ENCODE measurements at regions of chr10 and their contacts with region 1.

Region 1: GRCh38 chr10:119596537-119597404 is at the start of gene TIAL1:
- DNase-seq: peak; percentile 99
- H3K4me3 ChIP-seq: peak within 1 kb of the TSS; percentile 78 to 97 (median 88)
- H3K27ac ChIP-seq: peak within 1 kb of the TSS; percentile 96 to 99 (median 98)
- H3K4me1 ChIP-seq: peaks cover 4 to 47% (median 43%) of the 10 kb centered on the region in 4 donors
- H3K27me3 ChIP-seq: no peaks in the 10 kb centered on the region
- CTCF ChIP-seq: no peak
- EP300 ChIP-seq: no peak
- POLR2A ChIP-seq: peak; percentile 73 to 87
- total RNA-seq, gene TIAL1: 68.3 to 132 (median 90.0) TPM

Region 2: DNA sequence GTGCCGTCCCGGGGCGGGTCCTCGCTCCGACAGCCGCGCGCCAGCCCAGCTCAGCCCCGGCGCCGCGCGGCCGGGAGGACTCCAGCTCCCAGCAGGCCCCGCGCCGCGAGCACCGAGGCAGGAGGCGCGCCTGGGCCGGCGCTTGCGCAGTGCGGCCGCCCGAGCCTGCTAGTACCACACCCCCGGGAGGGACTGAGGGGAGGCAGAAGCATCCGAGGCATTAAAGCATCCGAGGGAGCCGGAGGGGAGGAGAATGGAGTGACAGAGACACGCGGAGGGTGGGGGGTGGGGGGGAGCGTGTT is 389.5 kb before region 1 on chr10 and contains the start of gene GRK5:
- intact Hi-C with region 1: loop called (anchors 5 kb)
- DNase-seq: peak; percentile 98
- H3K4me3 ChIP-seq: peak within 1 kb of the TSS; percentile 60 to 87 (median 69)
- H3K27ac ChIP-seq: peak within 1 kb of the TSS; percentile 92 to 100 (median 98)
- H3K4me1 ChIP-seq: peaks cover 0 to 50% (median 43%) of the 10 kb centered on the region in 4 donors
- H3K27me3 ChIP-seq: no peaks in the 10 kb centered on the region
- CTCF ChIP-seq: no peak
- EP300 ChIP-seq: no peak
- POLR2A ChIP-seq: no peak
- total RNA-seq, gene GRK5: 19.8 to 32.4 (median 22.2) TPM

Region 3: DNA sequence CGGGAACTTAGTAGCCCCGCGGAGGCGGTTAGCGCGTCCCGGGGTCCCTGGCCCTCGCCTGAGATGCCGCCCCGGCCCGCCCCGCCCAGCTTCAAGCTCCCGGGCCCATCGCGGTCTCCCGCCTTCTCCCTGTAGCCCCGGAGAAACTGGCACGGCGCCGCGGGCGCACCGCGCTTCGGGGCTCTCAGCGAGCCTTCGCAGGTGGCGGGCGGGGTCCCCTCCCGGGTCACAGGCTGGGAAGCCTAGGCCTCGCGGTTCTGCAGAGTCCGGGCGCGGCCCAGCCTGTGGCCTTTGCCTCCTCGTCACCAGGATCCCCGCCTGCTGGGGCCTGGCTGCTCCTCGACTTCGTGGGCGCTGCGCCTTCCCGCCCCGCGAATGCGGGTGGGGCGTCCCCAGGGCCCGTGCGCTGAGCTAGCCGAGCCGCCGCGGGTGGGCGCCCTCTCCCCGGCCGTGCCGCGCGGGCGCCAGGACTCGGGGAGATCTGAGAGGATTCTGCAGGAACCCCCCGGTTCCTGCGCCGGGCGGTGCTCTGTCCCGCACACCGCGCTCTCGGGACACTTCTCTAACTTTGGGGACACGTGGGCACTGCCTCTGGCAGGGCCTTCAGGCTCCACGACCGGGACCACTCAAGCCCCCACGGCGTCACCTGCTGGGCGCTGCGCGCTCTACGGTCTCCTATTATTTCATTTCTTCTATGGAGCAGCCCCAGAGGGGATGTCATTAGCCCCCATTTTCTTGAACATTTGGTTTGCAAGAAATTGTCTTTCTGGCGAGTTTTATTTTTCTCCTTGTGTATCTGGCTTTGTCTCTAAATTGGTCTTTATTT is 53.6 kb before region 1 on chr10:
- intact Hi-C with region 1: loop called (anchors 2 kb)
- DNase-seq: peak; percentile 82
- H3K4me3 ChIP-seq: peak overlapping the region; percentile 73 to 96 (median 82)
- H3K27ac ChIP-seq: peak overlapping the region; percentile 78 to 97 (median 89)
- H3K4me1 ChIP-seq: peaks cover 0 to 66% (median 64%) of the 10 kb centered on the region in 4 donors
- H3K27me3 ChIP-seq: no peaks in the 10 kb centered on the region
- CTCF ChIP-seq: peak; percentile 26 to 53 (median 48)
- EP300 ChIP-seq: no peak
- POLR2A ChIP-seq: no peak

Region 4: DNA sequence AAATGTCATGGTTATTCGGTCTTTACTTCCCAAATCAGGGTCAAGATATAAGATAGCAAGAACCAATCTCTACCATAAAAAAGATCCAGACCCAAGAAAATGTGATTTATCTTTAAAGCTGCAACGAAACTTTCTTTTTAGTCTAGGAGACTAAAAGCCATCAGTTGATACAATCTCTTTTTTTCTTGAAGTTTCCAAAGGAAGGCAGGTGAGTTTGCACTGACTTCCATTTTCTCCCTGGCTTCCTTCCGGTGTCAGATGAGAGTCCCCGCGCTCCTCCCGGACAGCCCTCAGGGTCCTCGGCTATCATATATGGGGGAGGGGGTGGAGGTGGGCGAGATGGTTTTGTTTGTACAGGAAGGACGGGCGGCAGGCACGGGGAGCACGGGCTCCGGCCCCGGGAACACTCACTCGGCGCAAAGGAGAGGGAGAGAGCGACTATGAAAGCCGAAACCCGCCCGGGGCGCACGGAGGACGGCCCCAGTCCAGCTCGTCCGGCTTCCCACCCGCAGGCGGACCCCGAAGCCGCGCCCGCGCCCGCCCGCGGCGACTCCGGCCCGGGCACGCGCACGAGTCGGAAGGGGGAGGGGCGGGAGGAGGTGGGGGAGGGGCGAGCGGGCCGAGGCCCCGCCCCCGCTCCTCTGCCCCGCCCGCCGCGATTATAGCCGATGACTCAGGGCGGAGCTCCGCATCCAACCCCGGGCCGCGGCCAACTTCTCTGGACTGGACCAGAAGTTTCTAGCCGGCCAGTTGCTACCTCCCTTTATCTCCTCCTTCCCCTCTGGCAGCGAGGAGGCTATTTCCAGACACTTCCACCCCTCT is 54.1 kb after region 1 on chr10 and contains the start of gene BAG3:
- intact Hi-C with region 1: loop called (anchors 2 kb)
- DNase-seq: peak; percentile 98
- H3K4me3 ChIP-seq: peak within 1 kb of the TSS; percentile 94 to 99 (median 96)
- H3K27ac ChIP-seq: peak within 1 kb of the TSS; percentile 98 to 100 (median 99)
- H3K4me1 ChIP-seq: peaks cover 0 to 37% (median 29%) of the 10 kb centered on the region in 4 donors
- H3K27me3 ChIP-seq: no peaks in the 10 kb centered on the region
- CTCF ChIP-seq: no peak
- EP300 ChIP-seq: no peak
- POLR2A ChIP-seq: peak; percentile 71 to 81
- total RNA-seq, gene BAG3: 32.9 to 62.4 (median 43.9) TPM

Region 5: GRCh38 chr10:119892188-119893065 is 295.7 kb after region 1 on chr10 and contains the start of gene SEC23IP:
- intact Hi-C with region 1: loop called (anchors 5 kb)
- DNase-seq: peak; percentile 99
- H3K4me3 ChIP-seq: peak within 1 kb of the TSS; percentile 67 to 96 (median 82)
- H3K27ac ChIP-seq: peak within 1 kb of the TSS; percentile 86 to 93 (median 90)
- H3K4me1 ChIP-seq: peaks cover 0 to 51% (median 41%) of the 10 kb centered on the region in 4 donors
- H3K27me3 ChIP-seq: no peaks in the 10 kb centered on the region
- CTCF ChIP-seq: peak in 1 of 4 experiments; percentile 14
- EP300 ChIP-seq: peak in 1 of 4 donors; percentile 33
- POLR2A ChIP-seq: peak; percentile 70 to 82
- total RNA-seq, gene SEC23IP: 17.5 to 31.4 (median 19.1) TPM

Region 6: GRCh38 chr10:120262857-120263547 is 666.2 kb after region 1 on chr10:
- intact Hi-C with region 1: no loop called
- DNase-seq: no peak
- H3K4me3 ChIP-seq: no peak overlapping the region
- H3K27ac ChIP-seq: no peak overlapping the region
- H3K4me1 ChIP-seq: no peaks in the 10 kb centered on the region
- H3K27me3 ChIP-seq: no peaks in the 10 kb centered on the region
- CTCF ChIP-seq: no peak
- EP300 ChIP-seq: no peak
- POLR2A ChIP-seq: no peak

Measured in sigmoid colon (tissue), 7 donors.